GM12878 (cell line): ENCODE measurements at regions of chr6 and their contacts with region 1.

Region 1: DNA sequence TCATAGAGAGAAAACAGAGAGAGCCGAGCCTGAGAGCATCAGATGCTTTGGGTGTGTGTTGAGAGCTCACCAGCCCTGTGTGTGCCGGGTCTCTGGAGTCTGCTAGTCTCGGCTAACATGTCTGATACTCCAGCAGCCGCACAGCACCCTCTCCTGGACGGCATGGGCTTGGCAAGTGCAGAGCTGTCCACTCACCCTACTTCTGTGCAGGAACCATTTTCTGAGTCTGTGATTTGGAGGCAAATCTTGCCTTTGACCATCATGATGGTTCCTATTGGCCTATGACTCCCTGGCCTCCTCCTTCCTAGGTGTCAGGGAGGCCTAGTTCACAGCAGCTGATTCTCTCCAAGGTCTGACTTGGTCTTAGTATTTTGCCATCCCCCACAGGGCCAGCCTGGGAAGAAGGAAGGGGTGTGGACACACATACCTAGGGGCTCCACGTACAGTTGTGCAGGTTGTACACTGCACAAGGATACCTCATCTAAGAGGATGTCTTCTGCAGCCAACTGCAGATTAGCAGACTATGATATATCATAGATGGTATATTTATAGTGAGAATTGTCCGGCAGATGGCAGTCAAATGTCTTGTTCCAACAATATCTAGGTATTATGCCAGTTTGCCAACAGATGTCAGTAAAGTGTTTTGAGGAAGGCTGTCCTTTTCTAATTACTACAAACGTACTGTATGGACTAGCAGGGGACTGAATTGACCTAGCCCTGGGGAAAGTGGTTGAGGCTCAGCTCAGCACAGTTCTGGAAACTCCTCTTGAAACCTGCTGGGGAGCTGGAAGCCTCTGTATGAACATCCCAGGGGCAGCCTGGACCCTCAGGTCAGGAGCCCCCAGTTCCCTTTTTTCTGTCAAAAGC is 13.0 kb downstream of the FGD2 start:
- DNase-seq: peak; percentile 61
- ATAC-seq: peak; percentile 100
- H3K4me3 ChIP-seq: no peak overlapping the region
- H3K27ac ChIP-seq: no peak overlapping the region
- H3K4me1 ChIP-seq: peaks cover 7% of the 10 kb centered on the region; the same call in 1 of the 2 replicates
- H3K27me3 ChIP-seq: no peaks in the 10 kb centered on the region
- CTCF ChIP-seq: peak; percentile 96 to 99 (median 97); a peak in 5 of 6 replicates
- EP300 ChIP-seq: no peak
- POLR2A ChIP-seq: no peak
- RAD21 ChIP-seq: peak; percentile 96

Region 2: GRCh38 chr6:36678518-36679027 is 339.9 kb before region 1 on chr6 and contains the start of gene CDKN1A:
- CTCF ChIA-PET with region 1: no interaction called
- POLR2A ChIA-PET with region 1: no interaction called
- RAD21 ChIA-PET with region 1: no interaction called
- SMC1A ChIA-PET with region 1: no interaction called
- in situ Hi-C with region 1: no loop called
- intact Hi-C with region 1: no loop called
- DNase-seq: no peak
- ATAC-seq: peak; percentile 75
- H3K4me3 ChIP-seq: peak within 1 kb of the TSS; percentile 75
- H3K27ac ChIP-seq: peak within 1 kb of the TSS; percentile 88
- H3K4me1 ChIP-seq: peaks cover 44% of the 10 kb centered on the region
- H3K27me3 ChIP-seq: no peaks in the 10 kb centered on the region
- CTCF ChIP-seq: no peak
- EP300 ChIP-seq: 0 out of 4 replicates have a peak, but pooled peaks of 1 of the 2 experiments have one; percentile 38
- POLR2A ChIP-seq: peak; percentile 95
- RAD21 ChIP-seq: no peak
- polyA plus RNA-seq, gene CDKN1A: 25.2 to 48.4 TPM

Region 3: GRCh38 chr6:36865835-36866234 is 152.6 kb before region 1 on chr6:
- CTCF ChIA-PET with region 1: interaction called, 26 read pairs
- POLR2A ChIA-PET with region 1: no interaction called
- RAD21 ChIA-PET with region 1: no interaction called
- SMC1A ChIA-PET with region 1: interaction called, 4 read pairs
- in situ Hi-C with region 1: no loop called
- intact Hi-C with region 1: no loop called
- DNase-seq: no peak
- ATAC-seq: no peak
- H3K4me3 ChIP-seq: no peak overlapping the region
- H3K27ac ChIP-seq: no peak overlapping the region
- H3K4me1 ChIP-seq: no peaks in the 10 kb centered on the region
- H3K27me3 ChIP-seq: no peaks in the 10 kb centered on the region
- CTCF ChIP-seq: no peak
- EP300 ChIP-seq: no peak
- POLR2A ChIP-seq: no peak
- RAD21 ChIP-seq: no peak

Region 4: GRCh38 chr6:36955671-36956445 is 62.6 kb before region 1 on chr6:
- CTCF ChIA-PET with region 1: interaction called, 12 read pairs
- POLR2A ChIA-PET with region 1: interaction called, 3 read pairs
- RAD21 ChIA-PET with region 1: interaction called, 6 read pairs
- SMC1A ChIA-PET with region 1: interaction called, 7 read pairs
- in situ Hi-C with region 1: no loop called
- intact Hi-C with region 1: no loop called
- DNase-seq: no peak
- ATAC-seq: no peak; the same call in 1 of the 3 replicates
- H3K4me3 ChIP-seq: no peak overlapping the region
- H3K27ac ChIP-seq: no peak overlapping the region
- H3K4me1 ChIP-seq: 0 out of 2 replicates have a peak, but pooled peaks cover 3% of the 10 kb centered on the region
- H3K27me3 ChIP-seq: no peaks in the 10 kb centered on the region
- CTCF ChIP-seq: no peak
- EP300 ChIP-seq: no peak
- POLR2A ChIP-seq: no peak
- RAD21 ChIP-seq: no peak

Region 5: GRCh38 chr6:37029249-37029971 is 11.0 kb after region 1 on chr6:
- CTCF ChIA-PET with region 1: interaction called, 19 read pairs
- POLR2A ChIA-PET with region 1: interaction called, 3 read pairs
- RAD21 ChIA-PET with region 1: interaction called, 5 read pairs
- SMC1A ChIA-PET with region 1: interaction called, 8 read pairs
- in situ Hi-C with region 1: no loop called
- intact Hi-C with region 1: no loop called
- DNase-seq: no peak
- ATAC-seq: peak; percentile 90
- H3K4me3 ChIP-seq: no peak overlapping the region
- H3K27ac ChIP-seq: no peak overlapping the region
- H3K4me1 ChIP-seq: no peaks in the 10 kb centered on the region
- H3K27me3 ChIP-seq: no peaks in the 10 kb centered on the region
- CTCF ChIP-seq: peak; percentile 68 to 75 (median 72)
- EP300 ChIP-seq: no peak
- POLR2A ChIP-seq: no peak
- RAD21 ChIP-seq: peak; percentile 88

Region 6: DNA sequence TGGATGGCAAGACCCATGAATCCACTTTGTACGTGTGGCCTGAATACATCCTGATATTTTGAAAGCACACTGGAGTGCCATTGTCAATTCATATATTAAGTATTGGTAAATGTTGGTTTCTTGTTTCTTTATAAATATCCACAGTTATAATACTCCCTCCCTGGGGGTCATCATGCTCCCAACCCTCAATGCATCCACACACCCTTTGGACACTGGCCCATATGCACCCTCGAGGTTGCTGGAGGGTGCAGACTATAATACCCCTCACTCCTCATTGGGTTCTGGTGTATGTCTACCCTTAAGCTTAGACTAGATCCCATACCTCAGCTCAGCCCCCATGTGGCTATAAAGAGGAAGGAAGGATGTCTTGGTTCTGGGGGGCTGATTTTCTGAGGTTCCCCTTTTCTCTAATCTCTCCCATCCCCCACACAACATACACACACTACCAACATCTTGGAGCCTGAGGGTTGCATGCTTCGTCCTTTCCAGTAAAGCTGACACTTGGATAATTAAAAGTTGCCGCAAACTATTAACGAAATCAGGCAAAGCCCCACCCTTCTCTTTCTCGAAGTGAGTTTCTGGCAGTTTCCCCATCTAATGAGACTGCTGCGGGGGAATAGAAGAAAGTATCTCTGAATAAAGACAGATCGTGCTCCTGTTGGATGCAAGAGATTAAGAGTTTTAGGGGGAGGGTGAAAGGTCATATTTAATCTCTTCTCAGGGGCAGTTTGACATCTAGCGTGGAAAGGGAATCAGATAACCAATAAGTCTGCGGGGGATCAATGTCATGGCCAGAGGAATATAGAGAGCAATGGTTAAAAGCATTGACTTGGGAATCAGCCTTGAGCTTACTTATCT is 158.9 kb after region 1 on chr6:
- CTCF ChIA-PET with region 1: interaction called, 110 read pairs
- POLR2A ChIA-PET with region 1: no interaction called
- RAD21 ChIA-PET with region 1: interaction called, 76 read pairs
- SMC1A ChIA-PET with region 1: interaction called, 66 read pairs
- in situ Hi-C with region 1: loop called (anchors 10 kb)
- intact Hi-C with region 1: loop called (anchors 1 kb)
- DNase-seq: no peak
- ATAC-seq: no peak
- H3K4me3 ChIP-seq: no peak overlapping the region
- H3K27ac ChIP-seq: no peak overlapping the region
- H3K4me1 ChIP-seq: peaks cover 26% of the 10 kb centered on the region
- H3K27me3 ChIP-seq: no peaks in the 10 kb centered on the region
- CTCF ChIP-seq: no peak
- EP300 ChIP-seq: no peak
- POLR2A ChIP-seq: no peak
- RAD21 ChIP-seq: no peak